HAP-1 (cell line): ENCODE measurements at regions of chr9 and their contacts with region 1.

Region 1: DNA sequence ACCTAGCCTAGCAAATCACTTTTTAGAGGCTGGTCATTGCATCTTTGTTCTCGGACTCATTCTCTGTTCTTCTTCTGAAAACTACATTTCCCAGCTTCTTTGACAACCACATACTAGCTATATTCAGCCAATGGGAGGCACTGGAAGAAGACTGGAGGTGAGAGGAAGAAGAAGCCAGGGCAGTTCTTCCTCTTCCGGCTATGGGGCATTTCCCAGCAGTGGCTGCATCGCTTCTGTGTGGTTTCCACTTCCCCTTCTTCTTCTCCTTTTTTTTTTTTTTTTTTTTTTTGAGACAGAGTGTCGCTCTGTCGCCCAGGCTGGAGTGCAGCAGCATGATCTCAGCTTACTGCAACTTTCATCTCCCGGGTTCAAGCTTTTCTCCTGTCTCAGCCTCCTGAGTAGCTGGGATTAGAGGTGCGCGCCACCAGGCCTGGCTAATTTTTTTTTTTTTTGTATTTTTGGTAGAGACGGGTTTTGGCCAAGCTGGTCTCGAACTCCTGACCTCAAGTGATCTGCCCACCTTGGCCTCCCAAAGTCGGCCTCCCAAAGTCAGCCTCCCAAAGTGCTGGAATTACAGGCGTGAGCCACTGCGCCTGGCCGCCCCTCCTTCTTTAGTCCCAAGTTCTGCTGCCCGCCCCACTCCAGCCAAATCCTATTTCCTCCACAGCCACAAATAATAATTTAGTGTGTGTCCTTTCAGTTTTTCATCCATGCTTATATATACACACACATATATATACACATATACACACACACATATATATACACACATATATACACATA is 6.9 kb upstream of the UBAP1 start:
- DNase-seq: no peak
- H3K4me3 ChIP-seq: no peak overlapping the region
- H3K4me1 ChIP-seq: no peaks in the 10 kb centered on the region
- H3K27me3 ChIP-seq: no peaks in the 10 kb centered on the region

Region 2: GRCh38 chr9:33924978-33925797 is 246.8 kb before region 1 on chr9:
- in situ Hi-C with region 1: no loop called
- DNase-seq: peak; percentile 38 to 71
- H3K4me3 ChIP-seq: no peak overlapping the region
- H3K4me1 ChIP-seq: no peaks in the 10 kb centered on the region
- H3K27me3 ChIP-seq: no peaks in the 10 kb centered on the region

Region 3: GRCh38 chr9:34222451-34222850 is 50.5 kb after region 1 on chr9:
- in situ Hi-C with region 1: loop called (anchors 5 kb)
- DNase-seq: no peak
- H3K4me3 ChIP-seq: no peak overlapping the region
- H3K4me1 ChIP-seq: peaks cover 14% of the 10 kb centered on the region
- H3K27me3 ChIP-seq: no peaks in the 10 kb centered on the region